Posterior vena cava (tissue), 2 donors: ENCODE measurements at regions of chr7 and their contacts with region 1.

Region 1: DNA sequence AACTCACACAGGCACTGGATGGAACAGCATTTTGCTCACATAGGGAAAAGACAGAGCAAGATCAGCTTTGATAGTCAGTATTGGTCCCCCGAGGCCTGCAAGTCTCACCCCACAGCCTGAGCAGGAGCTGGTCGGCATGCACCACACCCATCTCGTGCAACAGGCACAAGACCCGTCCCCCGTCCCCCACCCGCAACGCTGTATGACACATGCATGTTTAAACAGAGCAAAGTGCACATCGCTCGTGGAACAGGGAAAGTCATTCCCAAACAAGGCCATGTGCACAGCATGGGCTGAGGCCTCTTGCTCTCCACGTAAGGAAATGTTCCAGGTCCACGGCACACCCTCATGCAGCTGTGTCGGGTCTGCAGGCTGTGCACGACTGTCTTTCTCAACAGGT is 527.2 kb downstream of the ACTR3B start:
- DNase-seq: no peak

Region 2: DNA sequence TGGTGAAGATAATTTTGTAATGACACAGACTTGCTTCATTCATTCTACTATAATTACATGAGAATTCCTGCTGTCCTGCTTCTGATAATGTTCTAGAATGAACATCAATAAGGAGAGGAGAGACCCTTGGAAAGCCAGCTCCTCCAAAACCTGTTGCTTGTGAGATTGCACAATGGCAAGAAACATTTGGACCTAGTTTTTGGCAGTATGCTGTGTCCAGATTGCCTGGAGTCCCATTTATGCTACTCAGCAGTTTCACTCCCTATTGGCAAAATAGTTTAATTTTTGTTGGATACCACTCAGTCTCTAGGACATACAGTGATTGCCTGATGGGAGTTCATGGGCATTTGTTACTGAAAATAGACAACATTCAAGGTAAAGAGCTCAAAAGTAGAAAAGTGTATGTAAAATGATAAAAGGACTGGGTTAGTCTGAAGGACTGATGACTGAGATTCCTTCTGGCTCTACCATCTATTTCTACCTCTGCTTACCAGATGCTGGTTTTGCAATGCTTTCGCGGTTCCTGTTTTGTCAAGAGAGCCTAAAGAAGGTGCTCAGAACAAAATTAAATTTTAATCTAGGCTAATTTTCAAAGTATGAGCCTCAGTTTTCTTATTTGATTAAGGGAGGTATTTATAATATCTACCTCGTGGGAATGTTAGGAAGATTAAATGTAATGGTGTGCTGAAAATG is 535.2 kb before region 1 on chr7:
- intact Hi-C with region 1: no loop called
- DNase-seq: no peak

Region 3: GRCh38 chr7:155219936-155220769 is 1933.4 kb after region 1 on chr7:
- intact Hi-C with region 1: loop called in 1 of 2 experiments (anchors 5 kb)
- DNase-seq: peak; percentile 73